ENCODE measurements at regions of chr15 and their contacts with region 1.

Region 1: GRCh38 chr15:36883713-36884517 is 216.4 kb downstream of the MEIS2 start:
- DNase-seq: peak; percentile 89
- H3K4me3 Mint-ChIP-seq: no peak overlapping the region
- H3K27ac Mint-ChIP-seq: no peak overlapping the region
- H3K4me1 Mint-ChIP-seq: peaks cover 2% of the 10 kb centered on the region
- H3K27me3 Mint-ChIP-seq: peaks cover 96% of the 10 kb centered on the region

Region 2: DNA sequence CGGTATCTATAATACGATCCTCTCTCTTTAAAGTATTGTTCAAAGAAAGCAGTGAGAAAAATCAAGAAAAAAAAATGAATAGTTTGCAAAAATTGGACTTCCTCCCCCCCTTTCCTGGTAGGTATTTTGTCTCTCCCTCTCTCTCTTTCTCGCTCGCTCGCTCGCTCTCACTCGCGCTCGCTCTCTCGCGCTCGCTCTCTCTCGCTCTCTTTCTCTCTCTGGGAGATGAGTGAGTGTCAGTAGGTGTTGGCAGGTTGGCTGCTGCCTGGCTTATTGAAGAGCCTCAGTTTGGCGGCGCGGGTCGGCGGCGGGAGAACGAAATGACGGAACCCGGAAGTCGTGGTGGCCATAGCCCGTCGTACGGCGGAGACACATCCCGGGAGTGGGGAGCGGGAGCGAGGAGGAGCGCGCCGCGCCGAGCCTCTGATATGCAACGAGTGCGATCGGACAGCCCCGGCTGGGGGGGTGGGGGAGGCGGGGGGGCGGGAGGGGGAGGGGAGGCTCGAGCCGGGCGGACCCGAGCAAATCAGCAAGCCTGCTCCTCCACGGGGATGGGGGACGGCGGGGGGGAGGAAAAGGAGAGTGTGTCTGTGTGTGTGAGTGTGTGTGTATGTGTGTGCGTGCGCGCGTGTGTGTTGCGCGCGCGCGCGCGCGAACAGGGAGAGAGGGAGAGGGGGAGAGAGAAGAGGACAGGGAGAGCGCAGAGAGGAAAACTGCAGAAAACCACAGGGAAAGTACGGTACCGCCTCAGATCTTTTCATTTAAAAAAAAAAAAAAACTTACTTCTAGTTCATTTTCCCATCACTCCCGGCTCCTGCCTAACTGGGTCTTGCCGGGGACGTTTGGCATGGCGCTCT is 216.4 kb after region 1 on chr15 and contains the start of gene MEIS2:
- intact Hi-C with region 1: loop called (anchors 2 kb)
- DNase-seq: peak; percentile 80
- H3K4me3 Mint-ChIP-seq: peak within 1 kb of the TSS; percentile 90
- H3K27ac Mint-ChIP-seq: peak within 1 kb of the TSS; percentile 71
- H3K4me1 Mint-ChIP-seq: peaks cover 20% of the 10 kb centered on the region
- H3K27me3 Mint-ChIP-seq: peaks cover 89% of the 10 kb centered on the region
- total RNA-seq, gene MEIS2: not detected in 2 replicates